ENCODE measurements at regions of chr19 and their contacts with region 1.

Region 1: DNA sequence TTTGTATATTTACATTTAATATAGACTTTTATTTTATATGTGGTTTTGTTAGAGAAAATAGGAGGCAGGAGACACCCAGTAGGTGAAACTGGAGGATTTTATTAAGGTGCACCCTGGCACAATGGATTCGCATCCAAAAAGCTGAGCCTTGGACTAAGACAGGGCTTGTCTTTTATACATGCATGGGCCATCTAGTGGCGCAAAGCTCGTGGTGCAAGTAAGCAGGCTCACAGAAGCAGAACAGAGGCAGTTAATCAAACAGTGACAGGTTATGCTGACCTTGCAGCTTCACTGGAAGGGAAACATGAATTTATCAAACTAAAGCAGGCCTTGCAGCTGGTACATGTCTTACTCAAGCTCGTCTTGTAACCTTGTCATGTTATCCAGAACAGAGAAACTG is 58.8 kb upstream of the ZNF681 start:
- DNase-seq: peak in 7 of 9 experiments; percentile 9 to 59 (median 47)
- ATAC-seq: peak; percentile 49
- H3K4me3 ChIP-seq: no peak overlapping the region
- H3K4me3 Mint-ChIP-seq: no peak overlapping the region
- H3K27ac ChIP-seq: no peak overlapping the region
- H3K27ac Mint-ChIP-seq: no peak overlapping the region
- H3K4me1 ChIP-seq: no peaks in the 10 kb centered on the region
- H3K4me1 Mint-ChIP-seq: peaks cover 3% of the 10 kb centered on the region
- H3K27me3 ChIP-seq: no peaks in the 10 kb centered on the region
- H3K27me3 Mint-ChIP-seq: no peaks in the 10 kb centered on the region
- CTCF ChIP-seq: peak; percentile 38

Region 2: DNA sequence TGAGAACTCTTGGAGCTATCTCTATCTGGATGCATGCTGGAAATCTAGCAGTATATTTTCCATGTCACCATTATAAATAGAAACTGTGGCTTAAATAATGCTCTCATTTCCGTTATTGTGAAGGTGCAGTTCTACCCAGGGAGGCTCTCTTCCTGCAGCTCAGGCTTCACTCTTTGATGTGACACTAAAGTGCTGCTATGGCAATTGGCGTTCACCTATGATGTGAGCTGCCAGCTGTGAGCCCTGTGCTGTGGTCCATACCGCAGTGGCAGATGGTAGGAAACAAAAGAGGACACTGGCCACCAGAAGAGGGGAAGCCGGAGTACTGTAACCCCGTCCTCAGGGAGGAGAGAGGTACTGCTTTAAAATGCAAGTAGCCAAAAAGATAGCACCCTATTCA is 18.2 kb before region 1 on chr19:
- CTCF ChIA-PET with region 1: interaction called, 10 read pairs
- POLR2A ChIA-PET with region 1: no interaction called
- intact Hi-C with region 1: no loop called
- DNase-seq: peak in 8 of 9 experiments; percentile 9 to 76 (median 46)
- ATAC-seq: peak; percentile 95
- H3K4me3 ChIP-seq: peak overlapping the region in 1 of 2 experiments; percentile 11
- H3K4me3 Mint-ChIP-seq: peak overlapping the region; percentile 81
- H3K27ac ChIP-seq: peak overlapping the region; percentile 45 to 57
- H3K27ac Mint-ChIP-seq: peak overlapping the region; percentile 88
- H3K4me1 ChIP-seq: peaks cover 24% of the 10 kb centered on the region
- H3K4me1 Mint-ChIP-seq: peaks cover 42% of the 10 kb centered on the region
- H3K27me3 ChIP-seq: no peaks in the 10 kb centered on the region
- H3K27me3 Mint-ChIP-seq: no peaks in the 10 kb centered on the region
- CTCF ChIP-seq: no peak